ENCODE measurements at regions of chr4 and their contacts with region 1.

Region 1: DNA sequence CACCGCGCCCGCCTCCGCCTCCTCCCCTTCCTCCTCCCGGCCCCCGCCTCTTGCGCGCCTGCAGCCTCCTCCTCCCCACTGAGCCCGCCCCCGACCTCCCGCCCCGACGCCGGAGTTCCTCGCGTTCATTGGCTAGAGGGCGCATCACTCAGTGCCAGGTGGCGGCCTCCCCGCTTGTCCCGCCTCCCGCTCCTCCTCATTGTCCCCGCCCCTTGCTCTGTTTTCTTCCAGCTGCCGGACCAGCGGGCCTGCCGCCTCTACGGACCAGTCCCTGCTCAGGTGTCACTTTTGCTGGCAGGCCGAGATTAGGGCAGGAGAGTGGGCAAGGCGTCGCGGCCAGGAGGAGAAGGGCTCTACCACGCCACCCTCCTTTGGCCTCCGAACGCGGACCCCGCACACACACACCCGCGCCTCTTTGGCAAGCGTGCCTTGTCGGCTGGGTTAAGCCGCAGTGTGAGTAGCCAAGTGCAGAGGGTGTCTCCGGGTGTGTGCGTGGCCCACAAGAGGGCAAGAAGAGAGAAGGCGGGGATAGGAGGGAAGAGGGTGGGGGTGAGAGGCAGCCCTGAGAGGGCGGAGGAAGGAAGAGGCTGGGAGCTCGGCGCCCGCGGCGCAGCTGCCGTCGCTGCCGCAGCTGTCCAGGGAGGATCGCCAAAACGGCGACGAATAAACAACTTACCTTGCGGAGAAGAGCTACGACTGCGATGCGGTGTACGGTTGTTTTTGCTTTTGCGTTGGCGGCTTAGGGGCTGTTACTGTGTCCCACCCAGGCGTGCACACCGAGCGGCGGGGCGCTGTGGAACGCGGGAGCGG is 436 bp upstream of the PPP3CA start:
- DNase-seq: peak; percentile 99
- H3K4me3 Mint-ChIP-seq: peak overlapping the region; percentile 95
- H3K27ac Mint-ChIP-seq: peak overlapping the region; percentile 88
- H3K4me1 Mint-ChIP-seq: peaks cover 31% of the 10 kb centered on the region
- H3K27me3 Mint-ChIP-seq: peaks cover 9% of the 10 kb centered on the region

Region 2: DNA sequence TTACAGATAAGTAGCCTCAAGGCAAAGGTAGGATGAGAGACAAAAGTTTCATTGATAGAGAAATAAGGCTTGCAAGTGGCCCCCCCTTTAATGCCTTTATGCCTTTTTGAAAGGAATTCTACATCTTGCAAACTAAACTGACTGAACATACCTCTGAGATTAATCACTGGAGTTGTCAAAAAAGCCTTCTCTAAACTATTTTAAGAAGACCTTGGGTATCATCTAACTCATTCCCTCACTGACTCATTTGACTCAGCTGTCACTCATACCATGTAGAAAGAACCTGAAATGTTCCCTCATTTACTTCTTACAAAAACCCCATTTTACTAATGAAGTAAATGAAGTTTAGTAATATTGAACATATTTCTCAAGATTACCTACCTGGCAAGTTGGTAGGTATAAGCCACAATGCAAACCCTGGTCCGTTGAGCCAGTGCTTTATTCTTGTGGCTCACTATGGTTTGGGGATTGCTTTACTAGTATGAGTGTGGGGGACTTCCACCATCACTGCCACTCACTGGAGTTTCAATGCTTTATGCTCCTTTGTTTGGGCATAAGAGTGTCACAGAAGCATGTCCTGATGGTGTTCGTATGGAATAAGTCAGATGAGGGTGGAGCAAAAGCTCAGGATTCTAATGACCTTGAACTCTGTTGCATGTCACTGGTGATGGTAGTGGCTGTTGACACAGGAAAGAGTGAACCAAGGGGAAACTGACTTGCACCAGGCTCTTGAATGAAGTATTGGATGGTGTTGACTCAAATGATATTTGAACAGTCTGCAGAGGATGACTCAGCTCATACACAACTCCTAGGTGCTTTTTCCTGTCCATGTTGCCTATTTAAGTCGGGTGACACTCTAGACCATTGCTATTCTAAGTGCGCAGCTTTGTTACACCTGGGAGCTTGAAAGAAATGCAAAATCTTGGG is 524.4 kb before region 1 on chr4:
- CTCF ChIA-PET with region 1: no interaction called
- POLR2A ChIA-PET with region 1: no interaction called
- intact Hi-C with region 1: loop called (anchors 1 kb)
- DNase-seq: peak; percentile 57
- H3K4me3 Mint-ChIP-seq: no peak overlapping the region
- H3K27ac Mint-ChIP-seq: peak overlapping the region; percentile 88
- H3K4me1 Mint-ChIP-seq: peaks cover 15% of the 10 kb centered on the region
- H3K27me3 Mint-ChIP-seq: no peaks in the 10 kb centered on the region

Region 3: GRCh38 chr4:101155368-101155767 is 192.4 kb before region 1 on chr4:
- CTCF ChIA-PET with region 1: no interaction called
- POLR2A ChIA-PET with region 1: no interaction called
- intact Hi-C with region 1: loop called (anchors 1 kb)
- DNase-seq: no peak
- H3K4me3 Mint-ChIP-seq: no peak overlapping the region
- H3K27ac Mint-ChIP-seq: no peak overlapping the region
- H3K4me1 Mint-ChIP-seq: peaks cover 45% of the 10 kb centered on the region
- H3K27me3 Mint-ChIP-seq: no peaks in the 10 kb centered on the region

Region 4: GRCh38 chr4:101205916-101206315 is 141.8 kb before region 1 on chr4:
- CTCF ChIA-PET with region 1: interaction called, 3 read pairs
- POLR2A ChIA-PET with region 1: no interaction called
- intact Hi-C with region 1: loop called (anchors 1 kb)
- DNase-seq: peak; percentile 60
- H3K4me3 Mint-ChIP-seq: no peak overlapping the region
- H3K27ac Mint-ChIP-seq: peak overlapping the region; percentile 15
- H3K4me1 Mint-ChIP-seq: peaks cover 22% of the 10 kb centered on the region
- H3K27me3 Mint-ChIP-seq: no peaks in the 10 kb centered on the region

Region 5: DNA sequence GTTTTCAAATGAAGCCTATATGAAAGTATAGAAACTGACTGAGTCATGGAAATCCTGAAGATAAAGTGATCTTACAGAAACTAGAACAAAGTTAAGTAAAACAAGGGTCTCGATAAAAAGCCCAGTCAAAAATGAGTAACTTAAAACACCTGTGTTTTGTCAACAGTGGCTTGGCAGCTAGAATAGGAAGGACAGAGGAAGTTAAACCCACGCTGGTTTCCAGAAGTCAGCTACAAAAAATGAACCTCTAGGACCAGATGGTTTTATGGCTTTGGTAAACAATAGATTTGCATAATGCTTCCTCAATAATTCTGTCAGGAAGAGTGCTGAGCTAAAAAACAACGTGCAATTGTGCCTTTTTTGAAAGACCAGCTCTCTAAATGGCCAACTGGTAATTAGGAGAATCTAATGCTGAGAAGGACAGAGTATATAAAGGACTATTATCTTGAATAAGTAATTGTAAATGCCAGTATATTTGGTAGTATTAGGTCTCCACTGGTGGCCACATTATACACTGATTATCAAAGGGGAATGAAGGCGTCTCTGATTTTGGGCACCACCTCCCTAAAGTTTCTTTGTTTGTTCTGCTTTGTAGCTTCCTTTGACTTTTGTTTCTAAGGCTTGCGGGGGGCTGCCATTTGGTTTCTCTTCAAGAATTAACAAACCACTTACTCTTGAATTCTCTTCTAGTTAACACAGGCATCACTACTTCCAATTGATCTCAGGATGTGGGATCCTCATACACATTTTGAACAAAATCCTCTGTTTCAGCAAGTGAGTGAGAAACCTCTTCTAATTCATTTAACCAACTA is 71.8 kb after region 1 on chr4:
- CTCF ChIA-PET with region 1: interaction called, 4 read pairs
- POLR2A ChIA-PET with region 1: interaction called, 12 read pairs
- intact Hi-C with region 1: loop called (anchors 2 kb)
- DNase-seq: no peak
- H3K4me3 Mint-ChIP-seq: no peak overlapping the region
- H3K27ac Mint-ChIP-seq: no peak overlapping the region
- H3K4me1 Mint-ChIP-seq: peaks cover 35% of the 10 kb centered on the region
- H3K27me3 Mint-ChIP-seq: peaks cover 38% of the 10 kb centered on the region

Region 6: GRCh38 chr4:101730291-101731117 is 382.7 kb after region 1 on chr4:
- CTCF ChIA-PET with region 1: interaction called, 3 read pairs
- POLR2A ChIA-PET with region 1: no interaction called
- intact Hi-C with region 1: loop called (anchors 2 kb)
- DNase-seq: peak; percentile 68
- H3K4me3 Mint-ChIP-seq: no peak overlapping the region
- H3K27ac Mint-ChIP-seq: no peak overlapping the region
- H3K4me1 Mint-ChIP-seq: no peaks in the 10 kb centered on the region
- H3K27me3 Mint-ChIP-seq: peaks cover 6% of the 10 kb centered on the region

Region 7: GRCh38 chr4:102826890-102827673 is 1479.3 kb after region 1 on chr4 and contains the start of gene UBE2D3:
- CTCF ChIA-PET with region 1: no interaction called
- POLR2A ChIA-PET with region 1: interaction called, 3 read pairs
- intact Hi-C with region 1: loop called (anchors 5 kb)
- DNase-seq: peak; percentile 97
- H3K4me3 Mint-ChIP-seq: no peak within 1 kb of the TSS
- H3K27ac Mint-ChIP-seq: no peak within 1 kb of the TSS
- H3K4me1 Mint-ChIP-seq: peaks cover 26% of the 10 kb centered on the region
- H3K27me3 Mint-ChIP-seq: no peaks in the 10 kb centered on the region
- total RNA-seq, gene UBE2D3: 415 to 447 TPM